Activated CD4-positive, alpha-beta T cell treated with anti-CD3 and anti-CD28 coated beads, Interleukin-2, amount 10 ng/mL, durations not matched to agents 24 days and 14 days (primary cell): ENCODE measurements at regions of chr14 and their contacts with region 1.

Region 1: GRCh38 chr14:22505697-22506377 is 83.2 kb downstream of the DAD1 start:
- DNase-seq: peak; percentile 71
- H3K4me3 Mint-ChIP-seq: peak overlapping the region; percentile 87
- H3K27ac Mint-ChIP-seq: peak overlapping the region; percentile 97
- H3K4me1 Mint-ChIP-seq: peaks cover 47% of the 10 kb centered on the region
- H3K27me3 Mint-ChIP-seq: no peaks in the 10 kb centered on the region

Region 2: GRCh38 chr14:22200977-22201605 is 304.7 kb before region 1 on chr14:
- intact Hi-C with region 1: loop called (anchors 10 kb)
- DNase-seq: peak; percentile 59
- H3K4me3 Mint-ChIP-seq: peak overlapping the region; percentile 28
- H3K27ac Mint-ChIP-seq: peak overlapping the region; percentile 48
- H3K4me1 Mint-ChIP-seq: peaks cover 9% of the 10 kb centered on the region
- H3K27me3 Mint-ChIP-seq: no peaks in the 10 kb centered on the region

Region 3: DNA sequence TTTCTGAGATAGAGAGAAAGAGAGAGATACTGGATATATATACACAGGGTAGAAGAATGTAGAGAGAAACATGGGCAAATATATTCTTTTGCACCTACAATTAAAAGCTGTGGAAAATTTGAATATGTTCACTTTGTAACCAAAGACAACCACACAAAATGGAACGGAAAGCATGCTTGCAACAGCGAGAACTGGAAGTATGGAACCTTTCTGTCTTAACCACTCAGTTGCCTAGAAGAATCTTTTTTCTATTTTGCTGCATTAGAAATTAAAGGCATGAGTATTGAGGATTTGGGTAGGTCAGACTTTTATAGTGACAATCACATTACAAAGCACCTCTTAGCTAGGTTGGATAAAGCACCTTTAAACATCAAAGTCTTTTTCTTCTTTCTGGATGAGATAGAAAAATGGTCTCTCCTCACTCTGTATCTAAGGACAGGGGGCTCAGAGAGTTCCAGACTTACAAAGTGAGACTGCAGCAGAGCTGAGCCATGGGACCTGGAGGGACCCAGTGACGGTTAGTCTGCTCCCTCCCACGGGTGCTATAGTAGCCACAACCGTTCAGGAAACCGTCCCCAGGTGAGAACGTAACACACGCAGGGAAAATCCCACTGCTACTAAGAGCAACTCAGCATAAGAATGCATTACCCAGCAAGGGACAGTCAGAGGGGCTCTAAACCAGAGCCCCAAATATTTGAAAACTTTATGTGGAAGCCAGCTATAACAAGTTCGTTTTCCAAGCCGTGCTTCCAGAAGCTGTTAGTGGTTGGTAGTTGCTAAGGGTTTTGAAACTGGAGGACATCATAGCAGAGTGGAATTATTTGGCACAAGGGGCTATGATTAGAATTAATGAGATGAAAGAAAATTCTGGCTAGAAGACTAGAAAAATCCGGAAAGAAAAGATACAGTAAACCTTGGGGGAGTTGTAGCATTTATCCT is 13.9 kb before region 1 on chr14:
- intact Hi-C with region 1: loop called (anchors 2 kb)
- DNase-seq: peak; percentile 77
- H3K4me3 Mint-ChIP-seq: peak overlapping the region; percentile 87
- H3K27ac Mint-ChIP-seq: peak overlapping the region; percentile 99
- H3K4me1 Mint-ChIP-seq: peaks cover 26% of the 10 kb centered on the region
- H3K27me3 Mint-ChIP-seq: no peaks in the 10 kb centered on the region

Region 4: GRCh38 chr14:22699801-22700564 is 194.1 kb after region 1 on chr14:
- intact Hi-C with region 1: no loop called
- DNase-seq: no peak
- H3K4me3 Mint-ChIP-seq: no peak overlapping the region
- H3K27ac Mint-ChIP-seq: no peak overlapping the region
- H3K4me1 Mint-ChIP-seq: no peaks in the 10 kb centered on the region
- H3K27me3 Mint-ChIP-seq: peaks cover 47% of the 10 kb centered on the region